ENCODE measurements at regions of chr1 and their contacts with region 1.

Region 1: DNA sequence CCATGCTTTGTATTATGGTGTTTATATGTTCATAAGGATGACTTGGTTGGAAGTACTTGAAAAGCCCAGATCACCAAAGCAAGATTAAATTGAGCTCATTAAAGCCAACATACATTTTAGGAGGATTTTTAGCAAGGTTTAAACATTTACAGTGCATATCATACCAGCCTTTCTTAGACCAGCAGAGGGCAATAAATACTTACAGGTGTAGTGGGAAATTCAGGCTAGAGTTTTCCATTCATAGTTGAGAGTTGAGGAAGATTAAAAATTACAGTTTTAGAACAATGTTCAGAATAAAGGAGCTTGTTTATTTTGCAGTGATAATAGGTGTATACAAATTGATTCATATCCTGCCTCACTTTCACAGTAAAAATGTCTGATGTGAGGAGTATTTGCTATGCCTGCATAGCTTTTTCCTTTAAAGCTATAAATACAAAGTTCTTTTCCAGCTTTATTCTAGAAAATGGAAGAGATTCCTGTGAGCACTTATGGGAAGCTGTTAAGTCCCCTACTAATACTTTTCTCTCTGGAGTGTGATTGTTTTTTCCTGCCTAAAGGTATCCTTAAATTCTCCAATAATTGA is 35.3 kb downstream of the DTL start:
- DNase-seq: no peak
- ATAC-seq: peak; percentile 54

Region 2: GRCh38 chr1:212234431-212235395 is 163.9 kb after region 1 on chr1:
- intact Hi-C with region 1: loop called (anchors 10 kb)
- DNase-seq: no peak
- ATAC-seq: peak; percentile 95

Region 3: DNA sequence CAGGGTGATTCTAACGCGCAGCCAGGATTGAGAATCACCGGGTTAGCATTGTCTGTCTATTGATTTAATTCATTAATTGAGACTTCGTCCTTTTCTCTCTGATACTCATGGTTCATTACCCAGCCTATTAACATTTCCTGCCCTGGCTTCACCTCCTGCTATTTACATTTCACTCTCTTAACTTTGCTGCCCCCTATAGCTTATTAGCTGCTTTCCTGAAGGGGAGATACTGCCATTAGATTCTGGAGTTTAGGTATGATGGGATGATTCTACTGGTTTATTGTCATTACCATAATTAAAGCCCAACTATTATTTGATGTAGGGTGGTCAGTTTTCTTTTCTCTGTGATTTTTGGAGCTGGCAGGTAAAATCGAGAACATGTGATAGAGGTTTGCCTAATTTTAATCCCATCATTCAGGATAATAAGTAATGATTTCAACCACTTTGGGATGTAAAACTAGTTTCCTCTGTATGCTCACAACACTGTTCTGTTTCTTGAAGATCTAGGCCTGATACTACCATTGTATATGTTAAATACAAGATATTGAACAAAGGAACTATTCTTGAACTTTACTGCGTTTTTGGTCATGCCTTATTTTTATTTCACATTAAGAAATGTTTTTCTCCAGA is 220.8 kb after region 1 on chr1:
- intact Hi-C with region 1: loop called (anchors 5 kb)
- DNase-seq: no peak
- ATAC-seq: peak; percentile 59

Region 4: GRCh38 chr1:212368073-212368484 is 297.3 kb after region 1 on chr1:
- intact Hi-C with region 1: loop called (anchors 5 kb)
- DNase-seq: no peak
- ATAC-seq: peak; percentile 76

Region 5: DNA sequence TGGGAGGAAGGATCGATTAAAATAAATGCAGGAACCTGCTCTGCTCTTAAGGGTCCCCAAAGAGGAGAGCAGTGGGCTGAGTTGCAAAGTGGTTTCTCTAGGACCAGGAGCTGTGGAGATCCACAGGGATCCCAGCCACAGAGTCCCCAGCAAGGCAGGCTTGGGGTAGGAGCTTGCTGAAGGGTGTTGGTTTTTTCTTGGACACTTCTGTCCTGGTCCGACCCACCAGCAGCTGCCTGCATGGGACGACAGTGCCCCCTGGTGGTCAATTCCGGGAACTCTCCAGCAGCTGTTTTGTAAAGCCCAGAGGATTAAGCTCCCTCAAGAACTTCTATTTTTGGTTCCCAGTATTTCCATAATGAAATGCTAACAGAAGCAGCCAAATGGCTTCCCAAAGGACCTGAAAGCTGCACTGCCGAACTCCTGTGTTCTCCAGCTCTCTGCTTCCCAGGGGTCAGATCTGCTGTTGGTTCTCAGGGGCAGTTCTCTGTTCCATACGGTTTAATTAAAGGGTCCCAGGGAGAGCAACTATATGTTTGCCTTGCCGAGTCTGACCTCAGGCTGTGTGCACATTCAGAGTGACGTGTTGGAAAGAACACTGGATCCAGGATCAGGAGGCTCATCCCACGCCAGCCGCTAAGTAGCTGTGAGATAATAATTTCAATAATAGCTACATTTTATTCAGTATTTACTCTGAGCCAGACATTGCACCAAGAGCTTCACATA is 385.2 kb after region 1 on chr1:
- intact Hi-C with region 1: loop called (anchors 2 kb)
- DNase-seq: peak; percentile 91
- ATAC-seq: peak; percentile 85

Measured in Right ventricle myocardium superior (tissue), 1 donor.